Activated CD4-positive, alpha-beta memory T cell treated with anti-CD3 and anti-CD28 coated beads for 36 hours (primary cell): ENCODE measurements at regions of chr7 and their contacts with region 1.

Region 1: GRCh38 chr7:114085592-114086501 is 167.0 kb upstream of the PPP1R3A start:
- DNase-seq: peak; percentile 52
- H3K4me3 Mint-ChIP-seq: peak overlapping the region; percentile 77
- H3K27ac Mint-ChIP-seq: no peak overlapping the region
- H3K4me1 Mint-ChIP-seq: peaks cover 38% of the 10 kb centered on the region
- H3K27me3 Mint-ChIP-seq: peaks cover 59% of the 10 kb centered on the region

Region 2: DNA sequence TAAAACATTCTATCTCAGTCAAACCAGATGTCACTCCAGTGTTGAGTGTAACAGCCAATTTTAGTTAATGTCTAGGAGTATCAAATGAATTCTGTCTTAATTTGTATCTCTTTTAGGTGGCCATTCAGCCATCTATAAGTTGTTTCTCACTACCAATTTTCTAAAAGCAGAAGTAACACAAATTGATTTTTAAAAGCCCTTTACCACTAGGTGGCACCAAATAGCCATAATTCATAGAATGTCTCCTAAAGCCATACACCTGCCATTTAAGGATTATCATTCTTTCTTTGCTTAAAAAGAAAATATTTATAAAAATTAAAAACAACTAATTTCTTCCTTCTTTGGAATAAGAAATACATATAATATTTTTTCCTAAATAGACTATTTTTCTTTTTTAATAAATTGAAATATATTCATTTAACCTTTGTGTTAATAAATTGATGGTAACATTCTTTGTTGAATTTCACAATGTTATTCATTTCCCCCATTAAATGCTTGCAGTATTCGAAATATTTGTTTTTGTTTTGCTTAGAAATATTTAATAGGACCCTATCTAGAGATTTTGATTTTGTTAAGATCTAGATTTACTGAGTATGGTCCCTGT is 59.3 kb before region 1 on chr7:
- CTCF ChIA-PET with region 1: interaction called, 4 read pairs
- POLR2A ChIA-PET with region 1: no interaction called
- intact Hi-C with region 1: loop called (anchors 5 kb)
- DNase-seq: no peak
- H3K4me3 Mint-ChIP-seq: no peak overlapping the region
- H3K27ac Mint-ChIP-seq: no peak overlapping the region
- H3K4me1 Mint-ChIP-seq: no peaks in the 10 kb centered on the region
- H3K27me3 Mint-ChIP-seq: peaks cover 5% of the 10 kb centered on the region

Region 3: GRCh38 chr7:114130866-114131265 is 45.0 kb after region 1 on chr7:
- CTCF ChIA-PET with region 1: no interaction called
- POLR2A ChIA-PET with region 1: no interaction called
- intact Hi-C with region 1: no loop called
- DNase-seq: no peak
- H3K4me3 Mint-ChIP-seq: no peak overlapping the region
- H3K27ac Mint-ChIP-seq: no peak overlapping the region
- H3K4me1 Mint-ChIP-seq: no peaks in the 10 kb centered on the region
- H3K27me3 Mint-ChIP-seq: no peaks in the 10 kb centered on the region

Region 4: GRCh38 chr7:114405427-114405826 is 319.6 kb after region 1 on chr7:
- CTCF ChIA-PET with region 1: no interaction called
- POLR2A ChIA-PET with region 1: no interaction called
- intact Hi-C with region 1: loop called (anchors 5 kb)
- DNase-seq: no peak
- H3K4me3 Mint-ChIP-seq: no peak overlapping the region
- H3K27ac Mint-ChIP-seq: no peak overlapping the region
- H3K4me1 Mint-ChIP-seq: no peaks in the 10 kb centered on the region
- H3K27me3 Mint-ChIP-seq: no peaks in the 10 kb centered on the region

Region 5: GRCh38 chr7:114715907-114716306 is 630.1 kb after region 1 on chr7:
- CTCF ChIA-PET with region 1: no interaction called
- POLR2A ChIA-PET with region 1: no interaction called
- intact Hi-C with region 1: loop called (anchors 5 kb)
- DNase-seq: peak; percentile 35
- H3K4me3 Mint-ChIP-seq: no peak overlapping the region
- H3K27ac Mint-ChIP-seq: no peak overlapping the region
- H3K4me1 Mint-ChIP-seq: peaks cover 12% of the 10 kb centered on the region
- H3K27me3 Mint-ChIP-seq: peaks cover 12% of the 10 kb centered on the region

Region 6: DNA sequence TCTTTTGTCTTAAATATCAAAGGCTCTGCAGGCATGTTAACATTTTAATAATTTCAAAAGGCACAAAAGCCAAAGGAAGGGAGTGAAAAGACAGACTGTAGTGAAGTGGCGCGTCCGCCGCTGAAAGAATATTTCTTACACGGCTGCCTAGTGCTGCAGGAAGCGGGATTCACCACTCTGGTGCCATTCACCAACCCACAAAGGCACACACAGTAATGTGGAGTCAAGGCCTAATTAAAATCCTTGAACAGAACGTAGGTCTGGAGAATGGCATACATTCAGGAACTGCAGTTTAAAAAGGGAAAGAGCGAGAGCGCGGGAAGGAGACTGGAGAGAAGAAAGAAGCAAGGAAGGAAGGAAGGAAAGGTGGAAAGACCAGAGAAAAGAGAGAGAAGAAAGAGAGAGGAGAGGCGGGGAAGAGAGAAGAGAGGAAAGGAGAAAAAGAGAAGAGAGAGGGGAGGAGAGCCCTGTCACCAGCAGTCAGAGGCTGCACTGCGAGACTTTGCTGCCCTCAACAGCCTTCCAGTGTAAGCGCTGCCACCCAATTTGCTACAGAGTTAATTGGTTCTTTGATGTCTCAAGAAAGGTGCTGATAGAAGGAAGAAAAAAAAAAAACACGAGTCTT is 1390.0 kb after region 1 on chr7:
- CTCF ChIA-PET with region 1: no interaction called
- POLR2A ChIA-PET with region 1: no interaction called
- intact Hi-C with region 1: loop called (anchors 5 kb)
- DNase-seq: peak; percentile 28
- H3K4me3 Mint-ChIP-seq: no peak overlapping the region
- H3K27ac Mint-ChIP-seq: no peak overlapping the region
- H3K4me1 Mint-ChIP-seq: peaks cover 11% of the 10 kb centered on the region
- H3K27me3 Mint-ChIP-seq: peaks cover 22% of the 10 kb centered on the region

Region 7: DNA sequence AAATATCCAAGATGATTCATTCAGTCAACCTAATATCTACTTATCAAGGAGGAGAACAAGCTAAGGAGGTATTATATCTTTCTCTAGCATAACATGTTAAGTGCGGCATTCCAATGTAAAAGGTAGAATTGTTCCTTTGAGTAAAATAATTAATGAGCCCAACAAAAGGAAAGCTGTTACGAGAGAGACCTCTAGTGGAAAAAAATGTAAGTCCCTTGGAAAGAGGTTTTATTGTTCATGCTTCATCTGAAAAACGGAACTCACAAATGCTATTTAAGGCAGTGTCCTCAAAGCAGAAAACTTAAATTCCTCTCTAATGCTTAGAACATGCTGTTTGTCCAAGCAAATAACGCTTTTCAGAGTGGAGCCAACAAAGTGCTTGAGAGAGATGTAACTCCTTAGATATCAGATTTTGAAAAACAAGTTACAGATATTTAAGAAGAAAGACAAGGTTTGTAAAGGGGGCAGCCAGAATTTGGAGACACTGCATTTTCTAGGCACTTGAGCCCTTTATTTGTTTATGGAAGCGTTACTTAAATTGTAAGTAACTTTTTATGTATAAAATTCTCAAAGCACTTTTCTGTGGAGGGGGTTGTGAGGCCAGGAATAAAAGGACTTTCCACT is 1824.8 kb after region 1 on chr7:
- CTCF ChIA-PET with region 1: interaction called, 5 read pairs
- POLR2A ChIA-PET with region 1: no interaction called
- intact Hi-C with region 1: loop called (anchors 5 kb)
- DNase-seq: no peak
- H3K4me3 Mint-ChIP-seq: no peak overlapping the region
- H3K27ac Mint-ChIP-seq: no peak overlapping the region
- H3K4me1 Mint-ChIP-seq: no peaks in the 10 kb centered on the region
- H3K27me3 Mint-ChIP-seq: peaks cover 7% of the 10 kb centered on the region